ENCODE measurements at regions of chr9 and their contacts with region 1.

Region 1: GRCh38 chr9:115524453-115525059 is 406.6 kb upstream of the TNC start:
- DNase-seq: peak; percentile 36
- H3K4me3 ChIP-seq: no peak overlapping the region
- H3K27ac ChIP-seq: no peak overlapping the region
- H3K4me1 ChIP-seq: peaks cover 6% of the 10 kb centered on the region
- H3K27me3 ChIP-seq: no peaks in the 10 kb centered on the region
- CTCF ChIP-seq: peak; percentile 27 to 80 (median 74)
- POLR2A ChIP-seq: no peak

Region 2: DNA sequence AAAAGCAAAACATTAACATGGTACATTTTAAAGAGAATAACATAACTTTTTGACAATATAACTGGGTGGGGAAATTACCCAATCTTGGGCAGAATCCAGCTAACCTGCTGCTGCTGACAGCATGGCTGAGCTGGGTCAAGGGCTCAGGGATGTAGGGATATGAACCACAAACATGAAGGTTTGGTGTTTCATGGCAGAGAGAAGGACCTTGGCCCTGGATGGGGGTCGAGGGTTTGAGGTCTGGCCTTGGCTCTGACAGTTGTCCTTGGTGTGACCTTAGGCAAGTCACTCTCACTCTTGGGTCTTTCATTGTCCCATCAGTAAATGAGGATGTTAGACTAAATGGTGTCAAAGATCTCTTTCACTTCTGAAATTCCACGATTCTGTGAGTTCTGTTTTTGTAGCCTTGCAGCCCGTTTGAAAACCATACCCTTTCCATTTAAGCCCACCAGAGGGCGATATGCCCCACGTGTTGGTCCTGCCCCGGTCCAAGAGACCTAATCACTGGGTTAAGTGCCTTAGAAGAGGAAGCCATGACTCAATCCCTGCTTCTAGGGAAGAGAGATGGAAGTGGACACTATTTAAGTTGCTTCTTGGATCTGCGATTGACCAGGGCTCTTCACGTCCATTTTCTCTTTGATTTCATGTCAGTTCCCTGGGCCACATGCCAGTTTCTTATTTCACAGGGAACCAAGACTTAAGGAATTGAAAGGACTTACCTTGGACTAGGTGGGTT is 785.8 kb before region 1 on chr9:
- intact Hi-C with region 1: loop called (anchors 2 kb)
- DNase-seq: peak; percentile 66
- H3K4me3 ChIP-seq: no peak overlapping the region
- H3K27ac ChIP-seq: no peak overlapping the region
- H3K4me1 ChIP-seq: no peaks in the 10 kb centered on the region
- H3K27me3 ChIP-seq: no peaks in the 10 kb centered on the region
- CTCF ChIP-seq: peak; percentile 75 to 94 (median 92)
- POLR2A ChIP-seq: no peak

Region 3: DNA sequence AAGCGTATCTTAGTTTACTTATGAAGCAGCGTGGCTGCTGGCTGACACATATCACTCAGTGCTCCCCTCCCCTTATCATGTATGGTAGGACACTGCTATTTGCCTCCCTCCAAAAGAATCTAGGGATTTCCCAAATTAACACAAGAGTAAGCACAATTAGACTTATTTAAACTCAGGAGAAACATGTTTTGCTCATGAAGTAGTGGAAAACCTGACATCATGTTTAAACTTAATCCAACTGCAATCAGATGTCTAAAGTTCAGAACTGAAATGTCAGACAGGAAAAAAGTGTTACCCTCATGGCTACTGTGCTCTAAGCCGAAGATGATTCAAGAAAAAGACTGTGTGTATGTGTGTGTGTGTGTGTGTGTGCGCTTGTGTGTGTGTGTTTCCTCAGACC is 82.5 kb before region 1 on chr9:
- intact Hi-C with region 1: no loop called
- DNase-seq: no peak
- H3K4me3 ChIP-seq: no peak overlapping the region
- H3K27ac ChIP-seq: no peak overlapping the region
- H3K4me1 ChIP-seq: peaks cover 4% of the 10 kb centered on the region
- H3K27me3 ChIP-seq: no peaks in the 10 kb centered on the region
- CTCF ChIP-seq: no peak
- POLR2A ChIP-seq: no peak

Measured in prostate gland (tissue), 2 donors.